Heart right ventricle (tissue), 16 donors: ENCODE measurements at regions of chr20 and their contacts with region 1.

Region 1: GRCh38 chr20:49541733-49542513 is 26.0 kb downstream of the PTGIS start:
- DNase-seq: peak; percentile 61 to 68
- ATAC-seq: peak in 7 of 8 donors; percentile 60 to 82 (median 75)
- H3K4me3 ChIP-seq: no peak overlapping the region
- H3K27ac ChIP-seq: peak overlapping the region in 4 of 10 donors; percentile 12 to 35 (median 32)
- H3K4me1 ChIP-seq: peaks cover 0 to 4% (median 0%) of the 10 kb centered on the region in 9 donors
- H3K27me3 ChIP-seq: no peaks in the 10 kb centered on the region
- CTCF ChIP-seq: peak; percentile 60 to 87 (median 80)

Region 2: DNA sequence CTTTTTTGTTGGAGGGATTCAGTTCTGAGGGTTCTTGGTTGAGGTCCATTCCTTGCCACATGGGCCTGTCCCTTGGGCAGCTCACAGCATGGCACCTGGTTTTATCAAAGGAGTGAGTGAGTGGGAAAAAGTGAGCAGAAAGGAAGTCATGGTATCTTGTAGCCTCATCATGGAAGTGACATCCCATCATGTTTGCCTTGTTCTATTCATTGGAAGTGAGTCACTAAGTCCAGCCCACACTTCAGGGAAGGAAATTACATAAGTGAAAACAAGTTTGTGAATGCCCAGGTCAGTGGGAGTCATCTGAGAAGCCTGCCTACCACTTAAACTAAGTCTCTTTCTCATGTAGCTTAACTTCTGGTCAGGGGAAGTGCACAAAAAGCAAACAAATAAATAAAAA is 231.2 kb before region 1 on chr20:
- intact Hi-C with region 1: no loop called
- DNase-seq: no peak
- ATAC-seq: no peak
- H3K4me3 ChIP-seq: no peak overlapping the region
- H3K27ac ChIP-seq: no peak overlapping the region
- H3K4me1 ChIP-seq: no peaks in the 10 kb centered on the region
- H3K27me3 ChIP-seq: peaks cover 0 to 17% (median 0%) of the 10 kb centered on the region in 7 donors
- CTCF ChIP-seq: no peak

Region 3: DNA sequence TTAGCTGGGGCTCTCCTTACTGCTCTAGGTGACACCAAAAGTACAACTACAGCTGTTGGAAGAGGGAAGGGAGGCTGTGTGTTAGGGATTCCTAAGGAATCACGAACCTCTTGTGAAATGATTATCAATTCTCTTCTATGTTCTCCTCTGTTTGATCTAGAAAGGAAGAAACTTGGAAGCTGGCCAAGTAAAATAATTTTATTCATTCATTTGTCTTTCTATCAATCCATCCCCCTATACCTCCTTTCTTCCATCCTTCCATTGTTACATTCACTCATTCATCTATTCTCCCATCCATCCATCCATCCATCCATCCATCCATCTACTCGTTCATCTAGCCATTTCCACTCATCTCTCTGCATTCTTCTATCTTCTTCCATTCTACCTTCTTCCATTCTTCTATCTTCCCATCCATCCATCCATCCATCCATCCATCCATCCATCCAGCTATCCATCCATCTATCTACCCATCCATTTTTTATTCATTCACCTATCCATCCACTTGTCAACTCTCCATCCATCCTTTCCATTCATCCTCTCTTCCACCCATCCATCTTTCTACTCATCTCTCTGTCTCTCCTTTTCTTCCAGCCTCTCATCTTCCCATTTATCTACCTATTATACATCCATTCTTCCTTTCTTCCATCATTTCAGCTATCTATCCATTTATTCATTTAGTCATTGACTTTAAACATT is 211.2 kb before region 1 on chr20:
- intact Hi-C with region 1: loop called in 1 of 10 experiments (anchors 5 kb)
- DNase-seq: no peak
- ATAC-seq: no peak
- H3K4me3 ChIP-seq: no peak overlapping the region
- H3K27ac ChIP-seq: no peak overlapping the region
- H3K4me1 ChIP-seq: no peaks in the 10 kb centered on the region
- H3K27me3 ChIP-seq: peaks cover 0 to 60% (median 38%) of the 10 kb centered on the region in 7 donors
- CTCF ChIP-seq: no peak

Region 4: GRCh38 chr20:49562311-49563014 is 20.5 kb after region 1 on chr20:
- intact Hi-C with region 1: no loop called
- DNase-seq: peak; percentile 75 to 89
- ATAC-seq: peak; percentile 90 to 96 (median 94)
- H3K4me3 ChIP-seq: peak overlapping the region in 2 of 10 donors; percentile 9 to 13
- H3K27ac ChIP-seq: peak overlapping the region; percentile 38 to 90 (median 70)
- H3K4me1 ChIP-seq: peaks cover 8 to 81% (median 24%) of the 10 kb centered on the region in 9 donors
- H3K27me3 ChIP-seq: peaks cover 0 to 24% (median 2%) of the 10 kb centered on the region in 7 donors
- CTCF ChIP-seq: no peak

Region 5: GRCh38 chr20:49620364-49621240 is 78.7 kb after region 1 on chr20:
- intact Hi-C with region 1: no loop called
- DNase-seq: no peak
- ATAC-seq: no peak
- H3K4me3 ChIP-seq: no peak overlapping the region
- H3K27ac ChIP-seq: no peak overlapping the region
- H3K4me1 ChIP-seq: peaks cover 0 to 12% (median 0%) of the 10 kb centered on the region in 9 donors
- H3K27me3 ChIP-seq: no peaks in the 10 kb centered on the region
- CTCF ChIP-seq: no peak

Region 6: GRCh38 chr20:49739042-49739441 is 197.1 kb after region 1 on chr20:
- intact Hi-C with region 1: loop called in 1 of 10 experiments (anchors 5 kb)
- DNase-seq: no peak
- ATAC-seq: peak in 1 of 8 donors; percentile 38
- H3K4me3 ChIP-seq: no peak overlapping the region
- H3K27ac ChIP-seq: no peak overlapping the region
- H3K4me1 ChIP-seq: no peaks in the 10 kb centered on the region
- H3K27me3 ChIP-seq: no peaks in the 10 kb centered on the region
- CTCF ChIP-seq: no peak

Region 7: GRCh38 chr20:49846206-49846807 is 304.4 kb after region 1 on chr20:
- intact Hi-C with region 1: loop called in 9 of 10 experiments (anchors 5 to 10 kb)
- DNase-seq: peak in 1 of 2 donors; percentile 51
- ATAC-seq: peak in 6 of 8 donors; percentile 63 to 73 (median 67)
- H3K4me3 ChIP-seq: no peak overlapping the region
- H3K27ac ChIP-seq: no peak overlapping the region
- H3K4me1 ChIP-seq: peaks cover 1 to 27% (median 19%) of the 10 kb centered on the region in 9 donors
- H3K27me3 ChIP-seq: no peaks in the 10 kb centered on the region
- CTCF ChIP-seq: peak; percentile 32 to 75 (median 65)

Region 8: GRCh38 chr20:49853640-49854039 is 311.7 kb after region 1 on chr20:
- intact Hi-C with region 1: loop called in 9 of 10 experiments (anchors 5 to 10 kb)
- DNase-seq: no peak
- ATAC-seq: no peak
- H3K4me3 ChIP-seq: no peak overlapping the region
- H3K27ac ChIP-seq: no peak overlapping the region
- H3K4me1 ChIP-seq: peaks cover 2 to 40% (median 25%) of the 10 kb centered on the region in 9 donors
- H3K27me3 ChIP-seq: no peaks in the 10 kb centered on the region
- CTCF ChIP-seq: no peak

Region 9: DNA sequence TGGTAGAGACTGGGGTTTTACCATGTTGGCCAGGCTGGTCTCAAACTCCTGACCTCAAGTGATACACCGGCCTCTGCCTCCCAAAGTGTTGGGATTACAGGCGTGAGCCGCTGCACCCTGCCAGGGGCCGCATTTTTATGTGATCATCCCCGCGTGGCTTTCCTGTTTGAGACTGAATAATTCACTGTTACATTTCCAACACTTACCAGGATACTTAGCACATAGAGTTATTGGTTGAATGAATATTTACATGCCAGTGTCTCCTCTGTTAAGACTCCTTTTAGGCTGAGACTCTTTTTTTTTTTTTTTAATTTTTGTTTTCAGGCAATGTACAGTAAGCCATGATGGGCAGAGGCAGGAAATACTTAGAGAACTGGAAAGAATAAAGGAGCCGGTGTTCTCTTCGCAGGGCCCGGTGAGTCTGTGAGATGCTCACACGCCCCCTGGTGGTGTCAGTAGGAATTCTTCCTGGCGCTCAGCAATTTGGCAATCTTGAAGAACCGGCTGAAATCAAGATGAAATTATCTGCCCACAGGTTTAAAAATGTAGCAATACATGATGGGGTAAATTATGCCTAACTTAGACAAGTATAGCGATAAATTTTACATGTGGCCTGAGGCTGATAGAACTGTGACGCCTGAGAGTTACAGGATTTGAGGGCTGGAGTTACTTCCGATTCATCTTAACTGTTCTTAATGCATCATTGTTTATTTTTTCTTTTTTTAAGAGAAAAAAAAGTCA is 386.6 kb after region 1 on chr20:
- intact Hi-C with region 1: loop called in 1 of 10 experiments (anchors 10 kb)
- DNase-seq: peak; percentile 72 to 77
- ATAC-seq: peak; percentile 76 to 89 (median 86)
- H3K4me3 ChIP-seq: no peak overlapping the region
- H3K27ac ChIP-seq: peak overlapping the region in 2 of 10 donors; percentile 6 to 48
- H3K4me1 ChIP-seq: peaks cover 0 to 19% (median 0%) of the 10 kb centered on the region in 9 donors
- H3K27me3 ChIP-seq: no peaks in the 10 kb centered on the region
- CTCF ChIP-seq: peak; percentile 87 to 95 (median 93)